Sciatic nerve (tissue), 2 donors: ENCODE measurements at regions of chr2 and their contacts with region 1.

Region 1: GRCh38 chr2:113889471-113890252 is at the start of gene ACTR3:
- DNase-seq: peak; percentile 99
- ATAC-seq: peak; percentile 98
- total RNA-seq, gene ACTR3: 173 TPM

Region 2: DNA sequence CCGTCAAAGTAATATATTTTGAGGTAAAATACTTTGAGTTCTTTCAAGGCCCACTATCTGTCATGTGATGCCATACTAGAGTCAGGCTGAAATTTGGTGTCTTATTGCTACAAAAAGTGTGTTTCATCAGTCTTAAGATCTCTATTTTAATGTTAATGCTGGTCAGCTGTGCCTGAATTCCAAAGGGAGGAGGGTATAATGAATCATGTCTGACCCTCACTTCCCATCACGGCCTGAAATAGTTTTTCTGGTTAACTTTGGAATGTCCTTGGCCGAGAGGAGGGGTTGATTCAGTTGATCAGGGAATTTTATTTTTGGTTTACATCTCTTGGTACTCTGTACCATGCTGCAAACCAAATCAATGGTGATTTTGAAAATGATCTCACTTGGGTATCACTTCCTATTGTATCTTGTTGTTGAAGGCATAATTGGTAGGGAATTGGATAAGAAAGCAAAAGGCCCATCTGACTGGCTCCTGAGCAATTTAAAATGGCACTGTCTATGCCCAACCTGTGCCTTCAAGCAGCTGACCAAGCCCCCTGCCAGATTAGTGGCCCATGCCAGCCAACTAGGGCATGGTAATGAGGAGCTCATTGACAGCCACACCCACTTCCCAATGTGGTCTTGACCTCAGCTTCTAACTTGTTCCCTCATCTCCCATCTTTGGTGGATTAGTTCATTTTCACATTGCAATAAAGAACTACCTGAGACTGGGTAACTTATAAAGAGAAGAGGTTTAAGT is 127.1 kb before region 1 on chr2:
- intact Hi-C with region 1: loop called (anchors 10 kb)
- DNase-seq: no peak
- ATAC-seq: no peak